A549 (cell line): ENCODE measurements at regions of chr17 and their contacts with region 1.

Region 1: DNA sequence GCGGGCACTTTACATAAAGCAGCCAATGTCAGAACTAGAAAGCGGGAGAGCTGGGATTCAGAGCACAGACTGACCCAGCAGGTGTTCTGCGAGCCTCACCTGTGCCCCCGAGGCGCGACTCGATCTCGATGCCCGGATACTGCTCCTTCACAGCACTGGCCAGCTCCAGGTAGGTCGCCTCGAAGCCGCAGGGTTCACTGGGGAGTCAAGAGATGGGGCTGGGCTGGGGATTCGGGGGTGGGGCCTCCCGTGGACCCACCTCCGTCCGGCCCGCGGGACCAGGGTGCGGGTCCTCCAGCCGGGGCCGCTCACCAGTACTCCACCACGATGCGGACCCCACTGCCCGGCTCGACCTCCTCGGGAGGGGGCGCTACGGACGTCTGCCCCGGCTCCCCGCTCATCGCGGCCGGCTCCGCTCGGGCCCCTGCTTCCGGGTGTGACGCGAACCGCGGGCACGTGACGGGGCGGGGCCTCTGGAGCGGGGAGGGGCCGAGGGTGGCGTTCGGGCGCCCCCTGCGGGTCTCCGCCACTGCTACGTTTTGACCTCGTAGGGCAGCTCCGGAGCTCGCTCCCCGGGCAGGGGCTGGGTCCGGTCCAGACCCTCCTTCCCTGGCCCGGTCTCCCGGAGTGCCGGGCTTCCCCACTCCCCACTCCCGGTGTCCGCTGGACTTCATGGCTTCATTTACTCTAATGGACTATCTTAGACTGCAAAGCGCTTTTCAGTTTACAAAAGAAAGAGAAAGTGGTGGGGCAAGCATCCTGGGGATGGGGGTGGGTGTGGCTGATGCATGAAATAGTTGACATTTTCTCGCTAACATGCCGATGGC is at the start of gene MIEN1:
- DNase-seq: peak; percentile 91 to 95
- ATAC-seq: peak; percentile 82 to 90
- H3K4me3 ChIP-seq: peak within 1 kb of the TSS; percentile 60
- H3K27ac ChIP-seq: peak within 1 kb of the TSS; percentile 93 to 94
- H3K4me1 ChIP-seq: peaks cover 6% of the 10 kb centered on the region
- CTCF ChIP-seq: peak; percentile 96
- EP300 ChIP-seq: no peak
- POLR2A ChIP-seq: peak; percentile 78
- RAD21 ChIP-seq: peak; percentile 61 to 86
- polyA plus RNA-seq, gene MIEN1: 63.9 and 111 TPM in 2 replicates

Region 2: GRCh38 chr17:39668199-39668966 is 61.9 kb before region 1 on chr17 and contains the start of gene PNMT:
- CTCF ChIA-PET with region 1: interaction called, 61 read pairs
- POLR2A ChIA-PET with region 1: interaction called, 5 read pairs
- DNase-seq: peak; percentile 78 to 84
- ATAC-seq: peak; percentile 30 to 52; a peak in 5 of 6 replicates
- H3K4me3 ChIP-seq: peak within 1 kb of the TSS; percentile 38
- H3K27ac ChIP-seq: peak within 1 kb of the TSS; percentile 74 to 89; a peak in 5 of 6 replicates
- H3K4me1 ChIP-seq: peaks cover 48% of the 10 kb centered on the region
- CTCF ChIP-seq: peak; percentile 68
- EP300 ChIP-seq: no peak
- POLR2A ChIP-seq: no peak
- RAD21 ChIP-seq: peak; percentile 43 to 49
- polyA plus RNA-seq, gene PNMT: not detected in 2 replicates

Region 3: DNA sequence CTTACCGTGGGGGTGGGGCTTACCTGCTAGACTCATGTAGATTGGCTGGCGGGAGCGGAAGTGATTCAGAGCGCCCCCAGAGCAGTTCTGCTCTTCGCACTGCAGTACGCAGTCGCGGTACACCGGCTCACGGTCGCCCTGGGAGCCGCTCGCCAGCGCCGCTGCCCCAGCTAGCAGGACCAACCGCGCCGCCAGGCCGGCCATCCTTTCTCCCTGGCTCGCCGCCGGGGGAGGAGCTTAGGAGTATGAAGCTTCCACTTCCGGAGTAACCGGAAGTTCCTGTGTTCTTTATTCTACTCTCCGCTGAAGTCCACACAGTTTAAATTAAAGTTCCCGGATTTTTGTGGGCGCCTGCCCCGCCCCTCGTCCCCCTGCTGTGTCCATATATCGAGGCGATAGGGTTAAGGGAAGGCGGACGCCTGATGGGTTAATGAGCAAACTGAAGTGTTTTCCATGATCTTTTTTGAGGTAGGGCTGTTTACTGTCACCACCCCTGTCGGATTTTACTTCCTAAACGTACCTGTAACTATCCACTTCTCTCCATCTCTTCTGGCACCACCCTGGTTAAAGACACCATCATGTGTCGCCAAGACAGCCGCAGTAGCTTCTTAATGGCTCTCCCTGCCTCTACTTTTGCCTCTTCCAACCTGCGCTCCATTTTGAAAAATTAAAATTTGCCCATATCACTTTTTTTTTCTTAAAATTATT is 42.3 kb before region 1 on chr17 and contains the start of gene PGAP3:
- CTCF ChIA-PET with region 1: interaction called, 18 read pairs
- POLR2A ChIA-PET with region 1: interaction called, 22 read pairs
- DNase-seq: peak; percentile 96 to 99
- ATAC-seq: peak; percentile 96 to 97
- H3K4me3 ChIP-seq: peak within 1 kb of the TSS; percentile 61
- H3K27ac ChIP-seq: peak within 1 kb of the TSS; percentile 80 to 92
- H3K4me1 ChIP-seq: peaks cover 7% of the 10 kb centered on the region
- CTCF ChIP-seq: 0 out of 3 replicates have a peak, but pooled peaks have one; percentile 5
- EP300 ChIP-seq: no peak
- POLR2A ChIP-seq: peak; percentile 66
- RAD21 ChIP-seq: no peak; a peak in 1 of 5 replicates
- polyA plus RNA-seq, gene PGAP3: 8.5 and 10.6 TPM in 2 replicates

Region 4: GRCh38 chr17:39704821-39705551 is 25.3 kb before region 1 on chr17:
- CTCF ChIA-PET with region 1: interaction called, 34 read pairs
- POLR2A ChIA-PET with region 1: interaction called, 42 read pairs
- DNase-seq: peak; percentile 38 to 40
- ATAC-seq: no peak
- H3K4me3 ChIP-seq: no peak overlapping the region
- H3K27ac ChIP-seq: peak overlapping the region in 1 of 2 experiments; percentile 24; a peak in 1 of 6 replicates
- H3K4me1 ChIP-seq: peaks cover 59% of the 10 kb centered on the region
- CTCF ChIP-seq: no peak
- EP300 ChIP-seq: no peak
- POLR2A ChIP-seq: no peak
- RAD21 ChIP-seq: no peak

Region 5: DNA sequence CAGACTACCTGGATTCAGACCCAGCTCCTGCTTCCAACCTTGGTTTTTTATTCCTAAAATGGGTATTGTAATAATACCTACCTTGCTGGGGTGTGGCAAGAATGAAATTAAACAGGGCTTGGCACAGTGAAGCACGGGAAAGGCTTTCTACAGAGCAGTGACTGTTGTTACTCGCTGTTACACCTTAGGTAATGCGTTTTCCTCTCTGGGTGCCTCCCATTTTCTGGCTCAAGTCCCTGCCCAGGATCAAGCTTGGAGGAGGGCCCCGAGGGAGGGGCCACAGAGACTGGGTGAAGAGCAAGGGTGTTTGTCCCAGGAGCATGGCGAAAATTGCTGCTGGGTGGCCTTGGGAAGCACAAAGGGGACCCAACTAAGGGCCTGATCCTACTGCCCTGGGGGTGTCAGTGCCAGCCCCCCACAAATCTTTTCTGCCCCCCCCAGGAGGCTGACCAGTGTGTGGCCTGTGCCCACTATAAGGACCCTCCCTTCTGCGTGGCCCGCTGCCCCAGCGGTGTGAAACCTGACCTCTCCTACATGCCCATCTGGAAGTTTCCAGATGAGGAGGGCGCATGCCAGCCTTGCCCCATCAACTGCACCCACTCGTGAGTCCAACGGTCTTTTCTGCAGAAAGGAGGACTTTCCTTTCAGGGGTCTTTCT is 13.3 kb before region 1 on chr17:
- CTCF ChIA-PET with region 1: interaction called, 46 read pairs
- POLR2A ChIA-PET with region 1: interaction called, 9 read pairs
- DNase-seq: no peak
- ATAC-seq: 0 out of 6 replicates have a peak, but pooled peaks of 1 of the 2 experiments have one; percentile 10
- H3K4me3 ChIP-seq: no peak overlapping the region
- H3K27ac ChIP-seq: no peak overlapping the region
- H3K4me1 ChIP-seq: no peaks in the 10 kb centered on the region
- CTCF ChIP-seq: no peak
- EP300 ChIP-seq: no peak
- POLR2A ChIP-seq: no peak
- RAD21 ChIP-seq: no peak